ENCODE measurements at regions of chr3 and their contacts with region 1.

Region 1: DNA sequence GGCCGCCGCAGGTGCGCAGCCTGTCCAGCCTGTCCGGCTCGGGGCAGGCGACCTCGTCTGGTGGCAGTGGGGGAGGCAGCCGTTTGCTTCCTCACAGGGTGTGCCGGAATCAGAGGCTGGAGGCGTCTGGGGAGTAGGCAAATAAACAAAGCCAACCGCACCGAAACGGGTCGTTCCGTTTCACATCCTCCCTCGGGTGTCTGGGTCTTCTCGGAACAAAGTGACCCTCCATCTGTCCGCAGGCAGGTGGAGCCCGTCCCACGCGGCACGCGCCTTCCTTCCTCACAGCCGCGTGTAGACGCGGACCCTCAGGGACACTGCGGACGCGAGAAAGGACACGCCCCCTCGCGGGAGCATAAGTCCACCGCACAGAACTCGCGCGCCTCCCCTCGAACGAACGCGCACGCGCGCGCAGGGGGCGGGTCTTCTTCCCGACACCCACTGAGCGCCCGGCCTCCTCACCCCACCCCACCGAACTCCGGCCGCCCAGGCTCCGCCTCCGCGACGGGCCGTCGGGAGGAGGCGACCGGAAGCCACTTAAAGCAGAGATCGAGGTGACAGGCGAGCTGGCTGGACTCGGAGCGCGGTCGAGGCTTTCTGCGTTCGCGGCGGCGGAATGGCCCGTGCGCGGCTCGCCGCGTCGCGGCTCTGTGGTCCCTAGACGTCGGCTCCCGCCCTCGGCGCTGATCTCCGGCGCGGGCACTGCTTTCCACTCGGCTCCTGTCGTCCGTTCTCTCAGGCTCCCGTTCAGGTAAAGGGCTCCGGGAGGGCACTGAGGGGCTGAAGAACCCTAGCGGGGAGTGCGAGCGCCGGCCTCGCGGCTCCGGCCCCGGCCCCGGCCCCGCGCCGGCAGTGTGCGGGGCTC is at the start of gene TIPARP:
- DNase-seq: peak; percentile 100
- H3K4me3 Mint-ChIP-seq: peak within 1 kb of the TSS; percentile 86
- H3K27ac Mint-ChIP-seq: peak within 1 kb of the TSS; percentile 89
- H3K4me1 Mint-ChIP-seq: peaks cover 40% of the 10 kb centered on the region
- H3K27me3 Mint-ChIP-seq: no peaks in the 10 kb centered on the region
- total RNA-seq, gene TIPARP: 22.1 and 22.8 TPM in 2 replicates

Region 2: DNA sequence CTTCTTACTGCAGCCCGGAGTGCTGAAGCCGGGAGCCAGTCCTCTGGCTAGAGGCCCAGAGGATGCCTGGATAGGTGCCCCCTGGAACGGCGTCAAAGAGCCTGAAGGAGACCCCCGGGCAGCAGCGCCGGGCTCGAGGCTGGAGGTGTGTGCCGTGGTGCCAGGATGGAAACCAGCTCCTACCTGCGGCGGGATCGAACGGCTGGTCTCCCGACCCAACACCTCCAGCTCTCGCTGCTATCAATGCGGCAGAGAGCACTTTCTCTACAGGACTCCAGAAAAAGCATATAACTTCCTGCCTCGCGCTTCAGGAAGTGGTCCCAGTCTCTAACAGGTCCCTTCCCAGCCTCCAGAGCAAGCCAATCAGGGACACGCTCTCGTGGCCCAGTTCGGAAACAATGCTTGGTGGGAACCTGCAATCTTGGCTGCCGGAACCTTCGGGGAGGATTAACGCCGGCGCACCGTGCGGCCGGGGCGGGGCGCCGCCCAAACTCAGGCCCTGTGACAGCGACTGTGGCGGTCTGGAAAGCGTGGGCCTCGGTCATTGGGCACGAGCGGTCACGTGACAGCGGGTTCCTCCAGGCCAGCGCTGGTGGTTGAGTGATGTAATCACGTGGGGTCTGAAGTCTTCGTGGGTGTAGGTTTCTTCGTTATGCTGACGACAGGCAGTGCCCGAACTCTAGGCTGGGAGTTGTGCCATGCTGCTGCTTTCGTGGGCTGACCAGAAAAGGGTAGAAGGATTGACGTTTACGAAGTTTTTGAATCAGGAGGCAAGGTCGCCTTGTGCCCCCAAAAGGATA is 819.9 kb before region 1 on chr3 and contains the start of gene SLC33A1:
- intact Hi-C with region 1: loop called (anchors 5 kb)
- DNase-seq: peak; percentile 99
- H3K4me3 Mint-ChIP-seq: peak within 1 kb of the TSS; percentile 90
- H3K27ac Mint-ChIP-seq: peak within 1 kb of the TSS; percentile 99
- H3K4me1 Mint-ChIP-seq: peaks cover 25% of the 10 kb centered on the region
- H3K27me3 Mint-ChIP-seq: no peaks in the 10 kb centered on the region
- total RNA-seq, gene SLC33A1: 30.2 and 33.6 TPM in 2 replicates

Region 3: GRCh38 chr3:156519758-156520162 is 154.5 kb before region 1 on chr3:
- intact Hi-C with region 1: no loop called
- DNase-seq: no peak
- H3K4me3 Mint-ChIP-seq: no peak overlapping the region
- H3K27ac Mint-ChIP-seq: no peak overlapping the region
- H3K4me1 Mint-ChIP-seq: peaks cover 24% of the 10 kb centered on the region
- H3K27me3 Mint-ChIP-seq: peaks cover 88% of the 10 kb centered on the region

Region 4: DNA sequence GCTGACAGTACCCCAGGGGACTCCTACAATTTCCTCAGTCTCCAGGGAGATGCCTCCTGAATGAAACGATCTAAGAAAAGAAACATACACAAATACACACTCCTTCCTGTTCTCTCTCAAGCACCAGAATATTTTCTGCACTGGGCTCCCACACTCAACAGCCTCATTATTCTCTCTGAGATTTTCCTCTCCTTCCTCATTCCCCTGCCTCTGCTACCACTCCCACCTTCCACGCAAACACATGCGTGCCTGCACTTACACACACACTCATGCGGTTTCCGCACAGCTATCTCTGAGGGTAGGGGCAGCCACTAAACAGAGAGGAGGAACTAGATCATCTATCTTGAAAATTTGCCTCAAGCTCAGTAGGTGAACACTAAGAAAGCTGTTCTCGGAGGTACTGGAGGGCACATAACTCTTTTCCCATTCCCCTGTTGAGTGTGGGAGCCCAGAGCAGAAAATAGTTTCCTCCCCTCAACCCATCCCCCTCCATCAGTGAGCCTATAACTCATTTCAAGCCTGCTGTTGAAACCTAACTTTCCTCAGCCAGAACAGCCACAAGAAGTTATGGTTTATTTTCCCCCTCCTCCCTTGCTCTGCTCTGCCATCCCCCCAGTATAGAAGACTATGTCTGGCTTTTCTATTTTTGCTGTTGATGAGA is 30.4 kb before region 1 on chr3:
- intact Hi-C with region 1: loop called (anchors 2 kb)
- DNase-seq: peak; percentile 56
- H3K4me3 Mint-ChIP-seq: peak overlapping the region; percentile 50
- H3K27ac Mint-ChIP-seq: peak overlapping the region; percentile 78
- H3K4me1 Mint-ChIP-seq: peaks cover 29% of the 10 kb centered on the region
- H3K27me3 Mint-ChIP-seq: peaks cover 3% of the 10 kb centered on the region

Region 5: DNA sequence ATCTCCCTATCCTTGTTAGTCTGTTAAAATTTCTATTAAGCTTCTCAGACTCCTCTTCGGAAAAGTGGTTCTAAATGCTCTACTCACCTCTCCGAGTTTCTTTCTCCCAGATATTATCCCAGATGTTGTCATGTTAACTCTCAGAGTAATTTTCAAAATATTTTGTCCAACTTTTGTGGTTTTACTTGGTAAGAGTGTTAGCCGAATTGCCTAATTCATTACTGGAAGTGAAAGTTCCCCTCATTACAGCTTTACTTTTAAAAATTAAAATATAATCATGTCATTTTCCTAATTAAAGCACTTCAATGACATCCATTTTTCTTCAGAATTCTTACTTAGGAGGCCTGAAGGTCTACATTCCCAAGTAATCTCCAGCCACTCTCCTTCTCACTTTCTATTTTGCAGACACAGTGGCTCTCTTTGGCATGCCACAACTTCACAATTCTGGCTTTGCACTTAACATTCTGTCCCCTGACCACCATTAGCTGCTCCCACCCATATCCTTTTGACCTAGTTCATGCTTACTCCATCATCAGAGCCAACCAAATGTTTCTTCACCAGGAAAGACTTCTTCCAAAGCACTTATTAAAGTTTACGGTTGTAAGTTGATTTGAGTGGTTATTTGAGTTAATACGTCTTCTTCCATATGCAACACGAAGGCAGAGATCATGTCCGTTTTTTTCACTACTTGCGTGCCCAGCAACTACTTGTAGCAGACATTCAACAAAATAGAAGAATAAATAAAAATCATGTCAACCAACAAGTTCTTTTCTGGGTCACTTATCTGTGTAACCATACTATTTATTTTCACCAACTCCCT is 10.1 kb before region 1 on chr3:
- intact Hi-C with region 1: no loop called
- DNase-seq: no peak
- H3K4me3 Mint-ChIP-seq: peak overlapping the region; percentile 47
- H3K27ac Mint-ChIP-seq: peak overlapping the region; percentile 28
- H3K4me1 Mint-ChIP-seq: peaks cover 59% of the 10 kb centered on the region
- H3K27me3 Mint-ChIP-seq: peaks cover 3% of the 10 kb centered on the region

Region 6: DNA sequence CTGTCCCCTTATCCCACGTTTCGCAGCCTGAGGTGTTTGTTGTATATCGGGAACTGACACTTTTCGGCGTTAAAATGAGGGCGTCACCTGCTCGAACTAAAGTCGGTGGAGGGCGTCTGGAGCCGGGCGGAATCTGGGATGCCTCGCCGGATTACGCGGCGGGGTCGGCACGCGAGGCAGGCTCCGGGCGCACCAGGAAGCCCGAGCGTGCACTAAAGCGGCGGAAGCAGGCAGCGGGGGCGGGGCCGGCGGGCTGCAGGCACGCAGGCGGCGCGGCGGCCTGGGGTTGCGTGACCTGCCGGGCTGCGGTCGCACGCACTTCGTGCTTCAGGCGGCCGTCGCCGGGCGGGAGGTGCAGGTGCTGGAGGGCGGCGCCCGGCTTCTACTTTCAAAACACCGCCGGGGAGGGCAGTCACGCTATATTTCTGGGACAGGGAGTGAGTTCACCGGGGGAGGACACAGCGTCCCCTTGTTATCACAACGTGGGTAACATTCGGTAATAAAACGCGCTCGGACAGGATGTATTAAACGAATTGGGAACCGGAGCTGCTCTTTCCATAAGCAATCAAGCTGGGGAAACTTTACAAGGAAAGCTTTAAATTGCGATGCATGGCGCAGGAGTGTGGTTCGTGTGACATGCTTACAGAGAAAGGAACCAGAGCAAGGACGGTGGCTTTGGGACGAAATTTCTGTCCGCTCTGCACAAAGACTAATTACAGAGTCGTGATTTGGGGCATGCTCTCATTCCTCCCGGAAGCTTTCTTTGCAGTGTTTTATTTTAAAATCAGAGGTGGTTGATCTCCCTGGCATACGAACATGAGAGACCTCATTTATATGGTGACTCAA is 142.7 kb after region 1 on chr3:
- intact Hi-C with region 1: loop called (anchors 1 kb)
- DNase-seq: peak; percentile 94
- H3K4me3 Mint-ChIP-seq: peak overlapping the region; percentile 84
- H3K27ac Mint-ChIP-seq: peak overlapping the region; percentile 95
- H3K4me1 Mint-ChIP-seq: peaks cover 67% of the 10 kb centered on the region
- H3K27me3 Mint-ChIP-seq: no peaks in the 10 kb centered on the region

Region 7: DNA sequence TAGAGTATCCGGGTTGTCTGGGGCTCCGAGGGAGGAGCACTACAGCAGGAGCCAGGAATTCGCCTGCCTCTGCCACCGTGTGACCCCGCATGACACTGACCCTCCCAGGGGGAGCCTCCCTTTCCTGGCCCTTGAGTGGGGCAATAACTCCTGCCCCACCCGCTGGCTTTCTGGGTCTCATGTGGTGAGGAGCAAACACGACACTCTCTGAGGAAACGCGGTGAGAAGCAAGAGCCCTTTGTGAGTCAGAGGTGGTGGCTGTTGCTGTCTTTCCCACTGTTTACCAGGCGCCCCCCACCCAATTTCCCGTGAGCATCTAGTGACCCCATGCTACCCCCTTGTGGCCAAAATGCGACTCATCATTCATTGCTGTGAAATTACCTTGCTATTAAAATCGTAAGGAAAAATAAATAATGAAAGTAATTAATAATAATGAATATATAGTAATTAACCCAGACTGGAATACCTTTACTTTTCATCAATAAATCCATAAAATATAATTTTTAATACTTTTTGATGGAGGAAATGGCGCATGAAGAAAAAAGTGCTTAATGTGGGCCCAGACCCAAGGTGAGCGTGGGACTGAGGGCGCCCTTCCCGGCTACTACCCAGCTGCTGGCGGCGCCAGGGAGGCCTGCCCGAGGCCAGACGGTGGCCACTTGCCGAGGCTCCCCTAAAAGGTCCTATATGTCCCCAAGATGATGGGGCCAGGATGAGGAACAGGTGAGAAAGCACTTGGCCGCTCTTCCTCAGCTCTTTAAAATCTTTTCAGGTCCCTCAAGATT is 456.4 kb after region 1 on chr3:
- intact Hi-C with region 1: loop called (anchors 1 kb)
- DNase-seq: peak; percentile 61
- H3K4me3 Mint-ChIP-seq: peak overlapping the region; percentile 52
- H3K27ac Mint-ChIP-seq: peak overlapping the region; percentile 95
- H3K4me1 Mint-ChIP-seq: peaks cover 79% of the 10 kb centered on the region
- H3K27me3 Mint-ChIP-seq: no peaks in the 10 kb centered on the region

Region 8: GRCh38 chr3:157174649-157175498 is 500.6 kb after region 1 on chr3:
- intact Hi-C with region 1: loop called (anchors 1 kb)
- DNase-seq: peak; percentile 99
- H3K4me3 Mint-ChIP-seq: peak overlapping the region; percentile 97
- H3K27ac Mint-ChIP-seq: peak overlapping the region; percentile 96
- H3K4me1 Mint-ChIP-seq: peaks cover 38% of the 10 kb centered on the region
- H3K27me3 Mint-ChIP-seq: no peaks in the 10 kb centered on the region

Measured in activated T-helper 2 cell treated with anti-CD3 and anti-CD28 coated beads, Interferon-gamma antibody, Interleukin-2, Interleukin-4, amounts not matched to agents 10 μg/mL and 5 μg/mL and 100 μg/mL, durations not matched to agents 14 hours and 24 hours and 36 hours (primary cell).